CD8-positive, alpha-beta memory T cell (primary cell): ENCODE measurements at regions of chr22 and their contacts with region 1.

Region 1: GRCh38 chr22:31313366-31314147 is 21.3 kb upstream of the PIK3IP1 start:
- DNase-seq: peak; percentile 45 to 71 (median 51)
- H3K4me3 ChIP-seq: no peak overlapping the region
- H3K4me3 Mint-ChIP-seq: no peak overlapping the region
- H3K27ac ChIP-seq: no peak overlapping the region
- H3K27ac Mint-ChIP-seq: peak overlapping the region in 6 of 8 donors; percentile 2 to 74 (median 8)
- H3K4me1 ChIP-seq: peaks cover 17% of the 10 kb centered on the region
- H3K4me1 Mint-ChIP-seq: peaks cover 6 to 15% (median 10%) of the 10 kb centered on the region in 3 donors
- H3K27me3 ChIP-seq: no peaks in the 10 kb centered on the region
- H3K27me3 Mint-ChIP-seq: no peaks in the 10 kb centered on the region

Region 2: GRCh38 chr22:31055635-31056159 is 257.9 kb before region 1 on chr22:
- CTCF ChIA-PET with region 1: no interaction called
- POLR2A ChIA-PET with region 1: no interaction called
- DNase-seq: no peak
- H3K4me3 ChIP-seq: no peak overlapping the region
- H3K4me3 Mint-ChIP-seq: no peak overlapping the region
- H3K27ac ChIP-seq: no peak overlapping the region
- H3K27ac Mint-ChIP-seq: no peak overlapping the region
- H3K4me1 ChIP-seq: no peaks in the 10 kb centered on the region
- H3K4me1 Mint-ChIP-seq: no peaks in the 10 kb centered on the region
- H3K27me3 ChIP-seq: no peaks in the 10 kb centered on the region
- H3K27me3 Mint-ChIP-seq: no peaks in the 10 kb centered on the region

Region 3: DNA sequence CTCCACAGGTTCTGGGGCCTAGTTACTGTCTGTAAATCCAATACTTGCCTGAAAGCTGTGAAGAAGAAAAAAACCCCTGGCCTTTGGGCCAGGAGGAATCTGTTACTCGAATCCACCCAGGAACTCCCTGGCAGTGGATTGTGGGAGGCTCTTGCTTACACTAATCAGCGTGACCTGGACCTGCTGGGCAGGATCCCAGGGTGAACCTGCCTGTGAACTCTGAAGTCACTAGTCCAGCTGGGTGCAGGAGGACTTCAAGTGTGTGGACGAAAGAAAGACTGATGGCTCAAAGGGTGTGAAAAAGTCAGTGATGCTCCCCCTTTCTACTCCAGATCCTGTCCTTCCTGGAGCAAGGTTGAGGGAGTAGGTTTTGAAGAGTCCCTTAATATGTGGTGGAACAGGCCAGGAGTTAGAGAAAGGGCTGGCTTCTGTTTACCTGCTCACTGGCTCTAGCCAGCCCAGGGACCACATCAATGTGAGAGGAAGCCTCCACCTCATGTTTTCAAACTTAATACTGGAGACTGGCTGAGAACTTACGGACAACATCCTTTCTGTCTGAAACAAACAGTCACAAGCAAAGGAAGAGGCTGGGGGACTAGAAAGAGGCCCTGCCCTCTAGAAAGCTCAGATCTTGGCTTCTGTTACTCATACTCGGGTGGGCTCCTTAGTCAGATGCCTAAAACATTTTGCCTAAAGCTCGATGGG is 34.8 kb before region 1 on chr22:
- CTCF ChIA-PET with region 1: interaction called, 12 read pairs
- POLR2A ChIA-PET with region 1: interaction called, 3 read pairs
- DNase-seq: peak in 3 of 5 donors; percentile 61 to 83 (median 66)
- H3K4me3 ChIP-seq: peak overlapping the region; percentile 28
- H3K4me3 Mint-ChIP-seq: peak overlapping the region; percentile 2 to 78 (median 64)
- H3K27ac ChIP-seq: peak overlapping the region; percentile 35
- H3K27ac Mint-ChIP-seq: peak overlapping the region; percentile 86 to 99 (median 96)
- H3K4me1 ChIP-seq: peaks cover 86% of the 10 kb centered on the region
- H3K4me1 Mint-ChIP-seq: peaks cover 72 to 83% (median 81%) of the 10 kb centered on the region in 3 donors
- H3K27me3 ChIP-seq: no peaks in the 10 kb centered on the region
- H3K27me3 Mint-ChIP-seq: peaks cover 0 to 3% of the 10 kb centered on the region in 2 donors

Region 4: DNA sequence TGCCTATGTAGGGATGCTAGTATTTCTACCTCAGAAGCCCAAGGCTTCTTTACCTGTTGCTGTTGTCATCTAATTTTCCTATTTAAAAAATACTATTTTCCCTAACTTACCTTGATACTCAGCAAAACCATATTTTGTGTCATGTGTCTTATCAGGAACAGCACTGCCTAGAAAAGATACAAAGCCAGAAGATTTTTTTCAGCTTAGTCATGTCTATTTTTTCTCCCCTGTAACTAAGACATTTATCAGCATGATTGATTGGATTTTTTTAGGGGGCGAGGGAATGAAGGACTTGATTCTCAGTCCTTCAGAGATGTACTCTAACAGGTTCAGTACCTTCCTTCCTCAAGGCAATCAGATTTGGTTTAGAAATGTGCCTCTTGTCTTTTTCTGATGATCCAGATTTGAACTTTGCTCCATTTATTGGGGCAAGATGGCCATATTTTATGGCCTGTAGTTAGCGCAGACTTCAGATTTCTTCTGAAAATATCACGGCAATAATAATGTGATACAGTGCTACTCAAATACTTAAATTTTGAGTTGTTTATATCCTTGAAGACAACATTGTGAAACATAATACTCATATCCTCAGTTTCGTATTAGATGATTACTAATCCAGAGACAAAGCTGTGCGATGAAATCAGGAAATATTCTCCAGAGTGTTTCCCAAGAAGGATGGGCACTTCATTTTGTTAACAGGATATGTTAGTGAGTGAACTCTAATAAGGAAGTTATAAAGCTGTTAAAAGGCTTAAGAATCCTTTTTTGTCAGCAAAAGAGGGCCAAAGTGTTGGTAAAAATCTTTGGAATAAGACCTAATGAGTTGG is 17.5 kb before region 1 on chr22:
- CTCF ChIA-PET with region 1: interaction called, 52 read pairs
- POLR2A ChIA-PET with region 1: interaction called, 37 read pairs
- DNase-seq: no peak
- H3K4me3 ChIP-seq: peak overlapping the region; percentile 23
- H3K4me3 Mint-ChIP-seq: peak overlapping the region in 6 of 7 donors; percentile 6 to 64 (median 58)
- H3K27ac ChIP-seq: no peak overlapping the region
- H3K27ac Mint-ChIP-seq: peak overlapping the region in 6 of 8 donors; percentile 23 to 88 (median 76)
- H3K4me1 ChIP-seq: peaks cover 39% of the 10 kb centered on the region
- H3K4me1 Mint-ChIP-seq: peaks cover 40 to 66% (median 62%) of the 10 kb centered on the region in 3 donors
- H3K27me3 ChIP-seq: no peaks in the 10 kb centered on the region
- H3K27me3 Mint-ChIP-seq: peaks cover 0 to 7% of the 10 kb centered on the region in 2 donors

Region 5: GRCh38 chr22:31302006-31302405 is 11.6 kb before region 1 on chr22:
- CTCF ChIA-PET with region 1: interaction called, 11 read pairs
- POLR2A ChIA-PET with region 1: interaction called, 4 read pairs
- DNase-seq: no peak
- H3K4me3 ChIP-seq: no peak overlapping the region
- H3K4me3 Mint-ChIP-seq: no peak overlapping the region
- H3K27ac ChIP-seq: no peak overlapping the region
- H3K27ac Mint-ChIP-seq: peak overlapping the region in 1 of 8 donors; percentile 27
- H3K4me1 ChIP-seq: peaks cover 14% of the 10 kb centered on the region
- H3K4me1 Mint-ChIP-seq: peaks cover 15 to 55% (median 42%) of the 10 kb centered on the region in 3 donors
- H3K27me3 ChIP-seq: no peaks in the 10 kb centered on the region
- H3K27me3 Mint-ChIP-seq: no peaks in the 10 kb centered on the region